Prostate gland (tissue), 2 donors: ENCODE measurements at regions of chr22 and their contacts with region 1.

Region 1: GRCh38 chr22:44625981-44626687 is 75.9 kb upstream of the PRR5 start:
- DNase-seq: peak; percentile 54
- H3K4me3 ChIP-seq: no peak overlapping the region
- H3K27ac ChIP-seq: no peak overlapping the region
- H3K4me1 ChIP-seq: no peaks in the 10 kb centered on the region
- H3K27me3 ChIP-seq: no peaks in the 10 kb centered on the region
- CTCF ChIP-seq: peak; percentile 97 to 99 (median 98)
- POLR2A ChIP-seq: no peak

Region 2: DNA sequence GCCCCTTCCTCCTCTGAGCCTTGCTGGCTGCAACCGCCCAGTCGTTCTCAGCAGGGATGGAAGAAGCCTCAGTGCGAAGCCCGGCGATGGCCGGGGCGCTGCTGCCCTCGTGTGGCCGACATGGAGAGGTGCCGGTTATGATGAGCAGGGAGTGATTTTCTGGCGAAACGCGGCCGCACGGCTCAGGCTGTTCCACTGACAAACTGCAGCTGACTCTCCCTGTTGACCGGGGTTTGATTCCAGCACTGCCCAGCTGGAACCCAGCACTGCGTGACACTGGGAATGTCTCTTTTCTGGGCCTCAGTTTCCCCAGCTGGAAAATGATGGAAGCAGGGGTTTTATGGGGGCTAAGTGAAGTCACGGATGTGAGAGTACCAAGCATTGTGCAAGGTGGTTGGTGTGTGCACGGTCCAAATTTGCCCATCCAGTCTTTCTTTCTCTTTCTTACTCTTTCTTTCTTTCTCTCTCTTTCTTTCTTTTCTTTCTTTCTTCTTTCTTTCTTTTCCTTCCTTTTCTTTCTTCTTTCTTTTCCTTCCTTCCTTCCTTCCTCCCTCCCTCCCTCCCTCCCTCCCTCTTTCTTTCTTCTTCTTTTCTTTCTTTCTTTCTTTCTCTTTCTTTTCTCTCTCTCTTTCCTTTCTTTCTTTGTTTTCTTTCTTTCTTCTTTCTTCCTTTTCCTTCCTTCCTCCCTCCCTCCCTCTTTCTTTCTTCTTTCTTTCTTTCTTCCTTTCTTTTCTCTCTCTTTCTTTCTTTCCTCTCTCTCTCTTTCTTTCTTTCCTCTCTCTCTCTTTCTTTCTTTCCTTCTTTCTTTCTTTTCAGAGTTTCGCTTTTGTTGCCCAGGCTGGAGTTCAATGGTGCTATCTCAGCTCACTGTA is 1240.1 kb before region 1 on chr22:
- intact Hi-C with region 1: loop called (anchors 5 kb)
- DNase-seq: peak; percentile 66
- H3K4me3 ChIP-seq: no peak overlapping the region
- H3K27ac ChIP-seq: no peak overlapping the region
- H3K4me1 ChIP-seq: no peaks in the 10 kb centered on the region
- H3K27me3 ChIP-seq: no peaks in the 10 kb centered on the region
- CTCF ChIP-seq: peak; percentile 72 to 92 (median 82)
- POLR2A ChIP-seq: no peak

Region 3: GRCh38 chr22:43993027-43993760 is 632.9 kb before region 1 on chr22:
- intact Hi-C with region 1: loop called (anchors 1 kb)
- DNase-seq: peak; percentile 20
- H3K4me3 ChIP-seq: no peak overlapping the region
- H3K27ac ChIP-seq: no peak overlapping the region
- H3K4me1 ChIP-seq: no peaks in the 10 kb centered on the region
- H3K27me3 ChIP-seq: no peaks in the 10 kb centered on the region
- CTCF ChIP-seq: peak; percentile 72 to 86 (median 86)
- POLR2A ChIP-seq: no peak

Region 4: GRCh38 chr22:44080936-44081861 is 544.9 kb before region 1 on chr22:
- intact Hi-C with region 1: loop called (anchors 2 kb)
- DNase-seq: peak; percentile 73
- H3K4me3 ChIP-seq: no peak overlapping the region
- H3K27ac ChIP-seq: no peak overlapping the region
- H3K4me1 ChIP-seq: no peaks in the 10 kb centered on the region
- H3K27me3 ChIP-seq: no peaks in the 10 kb centered on the region
- CTCF ChIP-seq: peak; percentile 56 to 85 (median 75)
- POLR2A ChIP-seq: no peak

Region 5: DNA sequence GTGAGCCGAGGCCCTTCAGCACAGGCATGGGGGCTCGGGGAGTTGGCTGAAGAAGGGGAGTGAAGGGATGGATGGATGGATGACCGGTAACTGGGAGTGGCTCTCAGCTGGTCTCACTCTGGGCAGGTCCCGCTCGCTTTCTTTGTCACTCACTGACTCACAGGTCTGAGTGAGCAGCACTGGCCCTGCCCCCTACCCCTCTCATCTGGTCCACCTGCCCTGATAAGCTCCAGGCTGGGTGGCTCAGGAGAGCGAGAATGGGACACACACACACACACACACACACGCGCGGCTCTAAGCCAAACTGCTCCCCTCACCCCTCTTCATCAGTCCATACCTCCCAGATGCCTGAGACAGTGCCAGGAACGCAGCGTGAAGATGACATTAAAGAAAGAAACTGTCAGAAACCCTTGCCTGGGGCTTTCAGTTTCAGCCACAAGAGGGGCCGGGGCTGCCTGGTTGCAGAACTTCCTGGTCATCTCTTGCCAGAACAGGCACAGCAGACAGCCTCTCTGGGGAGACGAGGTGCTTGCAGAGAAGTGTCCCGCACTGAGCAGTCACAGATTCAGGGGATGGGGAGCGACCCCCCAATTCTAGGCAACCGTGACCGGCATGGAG is 296.8 kb before region 1 on chr22:
- intact Hi-C with region 1: loop called (anchors 5 kb)
- DNase-seq: no peak
- H3K4me3 ChIP-seq: no peak overlapping the region
- H3K27ac ChIP-seq: no peak overlapping the region
- H3K4me1 ChIP-seq: no peaks in the 10 kb centered on the region
- H3K27me3 ChIP-seq: peaks cover 7% of the 10 kb centered on the region
- CTCF ChIP-seq: no peak
- POLR2A ChIP-seq: no peak